Ascending aorta (tissue), 2 donors: ENCODE measurements at regions of chr12 and their contacts with region 1.

Region 1: GRCh38 chr12:14995583-14996425 is 23.0 kb downstream of the PDE6H start:
- DNase-seq: no peak
- H3K4me3 ChIP-seq: no peak overlapping the region
- H3K27ac ChIP-seq: no peak overlapping the region
- H3K4me1 ChIP-seq: peaks cover 0 to 6% of the 10 kb centered on the region in 2 donors
- H3K27me3 ChIP-seq: no peaks in the 10 kb centered on the region
- CTCF ChIP-seq: peak; percentile 56 to 68 (median 58)

Region 2: GRCh38 chr12:14629832-14630710 is 365.7 kb before region 1 on chr12:
- intact Hi-C with region 1: loop called (anchors 10 kb)
- DNase-seq: peak; percentile 25 to 87
- H3K4me3 ChIP-seq: no peak overlapping the region
- H3K27ac ChIP-seq: no peak overlapping the region
- H3K4me1 ChIP-seq: peaks cover 0 to 3% of the 10 kb centered on the region in 2 donors
- H3K27me3 ChIP-seq: no peaks in the 10 kb centered on the region
- CTCF ChIP-seq: peak; percentile 97 to 99 (median 98)

Region 3: DNA sequence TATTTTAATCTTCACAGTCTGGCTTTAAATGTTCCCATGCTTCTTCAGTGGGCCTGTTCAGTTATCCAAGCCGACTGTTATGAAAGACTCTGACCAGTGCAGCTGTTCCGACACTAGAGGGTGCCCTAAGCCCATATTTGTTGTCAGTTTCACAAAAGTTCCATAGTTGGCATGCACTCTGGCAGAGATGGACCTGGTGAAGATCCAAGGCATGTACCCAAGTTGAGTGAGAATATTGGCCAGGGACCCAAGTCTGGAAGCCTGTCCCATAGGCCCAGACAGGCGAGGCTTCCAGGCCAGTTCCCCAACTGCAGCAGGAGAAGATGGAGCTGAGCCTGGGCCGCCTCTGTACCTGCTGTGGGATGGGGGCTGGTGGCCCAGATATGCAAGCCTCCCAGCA is 272.0 kb before region 1 on chr12:
- intact Hi-C with region 1: loop called (anchors 5 kb)
- DNase-seq: peak in 1 of 2 donors; percentile 65
- H3K4me3 ChIP-seq: no peak overlapping the region
- H3K27ac ChIP-seq: no peak overlapping the region
- H3K4me1 ChIP-seq: no peaks in the 10 kb centered on the region
- H3K27me3 ChIP-seq: no peaks in the 10 kb centered on the region
- CTCF ChIP-seq: peak; percentile 47 to 71 (median 66)

Region 4: GRCh38 chr12:14930299-14930698 is 65.5 kb before region 1 on chr12:
- intact Hi-C with region 1: loop called (anchors 2 kb)
- DNase-seq: no peak
- H3K4me3 ChIP-seq: no peak overlapping the region
- H3K27ac ChIP-seq: peak overlapping the region; percentile 44 to 59
- H3K4me1 ChIP-seq: peaks cover 0 to 25% of the 10 kb centered on the region in 2 donors
- H3K27me3 ChIP-seq: no peaks in the 10 kb centered on the region
- CTCF ChIP-seq: peak; percentile 17 to 40 (median 18)

Region 5: DNA sequence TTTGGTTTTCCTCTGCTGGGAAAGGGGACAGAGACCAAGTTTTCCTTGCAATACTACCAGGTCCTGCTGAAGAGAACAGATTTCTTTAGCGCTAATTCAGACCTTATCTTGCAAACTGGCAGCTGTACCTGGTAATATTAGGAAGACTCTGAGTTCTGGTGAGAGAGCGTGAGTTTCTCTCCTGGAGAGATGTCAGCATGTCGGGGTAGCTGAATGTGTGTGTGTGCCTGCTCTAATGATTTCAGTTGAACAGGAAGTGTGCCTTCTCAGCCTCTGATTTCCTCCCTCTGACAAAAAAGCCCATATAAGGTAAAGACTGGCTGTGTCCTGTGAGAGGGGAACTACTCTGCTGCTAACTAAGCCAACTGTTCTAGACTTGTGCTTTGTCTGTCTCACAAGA is 47.1 kb before region 1 on chr12:
- intact Hi-C with region 1: loop called (anchors 5 kb)
- DNase-seq: peak in 1 of 2 donors; percentile 81
- H3K4me3 ChIP-seq: peak overlapping the region in 1 of 2 donors; percentile 50
- H3K27ac ChIP-seq: peak overlapping the region; percentile 91 to 96
- H3K4me1 ChIP-seq: peaks cover 9 to 56% of the 10 kb centered on the region in 2 donors
- H3K27me3 ChIP-seq: no peaks in the 10 kb centered on the region
- CTCF ChIP-seq: no peak